Dendritic cell treated with granulocyte-macrophage colony-stimulating factor and Interleukin-4, amounts not matched to agents 40 ng/mL and 50 ng/mL, for 4 days (primary cell): ENCODE measurements at regions of chr11 and their contacts with region 1.

Region 1: DNA sequence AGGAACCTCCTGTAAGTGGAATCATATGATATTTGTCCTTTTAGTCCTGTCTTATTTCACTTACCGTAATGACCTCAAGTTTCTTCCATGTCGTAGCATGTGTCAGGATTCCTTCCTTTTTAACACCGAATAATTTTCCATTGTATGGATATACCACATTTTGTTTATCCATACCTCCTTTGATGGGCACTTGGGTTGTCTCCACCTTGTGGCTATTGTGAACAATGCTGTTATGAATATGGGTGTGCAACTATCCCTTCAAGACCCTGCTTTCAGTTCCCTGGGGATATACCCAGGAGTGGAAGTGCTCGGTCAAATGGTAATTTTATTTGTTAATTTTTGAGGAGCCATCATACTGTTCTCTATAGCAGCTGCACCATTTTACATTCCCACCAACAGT is 244.9 kb upstream of the BLID start:
- H3K4me3 Mint-ChIP-seq: no peak overlapping the region
- H3K27ac Mint-ChIP-seq: no peak overlapping the region
- H3K4me1 Mint-ChIP-seq: no peaks in the 10 kb centered on the region
- H3K27me3 Mint-ChIP-seq: no peaks in the 10 kb centered on the region

Region 2: DNA sequence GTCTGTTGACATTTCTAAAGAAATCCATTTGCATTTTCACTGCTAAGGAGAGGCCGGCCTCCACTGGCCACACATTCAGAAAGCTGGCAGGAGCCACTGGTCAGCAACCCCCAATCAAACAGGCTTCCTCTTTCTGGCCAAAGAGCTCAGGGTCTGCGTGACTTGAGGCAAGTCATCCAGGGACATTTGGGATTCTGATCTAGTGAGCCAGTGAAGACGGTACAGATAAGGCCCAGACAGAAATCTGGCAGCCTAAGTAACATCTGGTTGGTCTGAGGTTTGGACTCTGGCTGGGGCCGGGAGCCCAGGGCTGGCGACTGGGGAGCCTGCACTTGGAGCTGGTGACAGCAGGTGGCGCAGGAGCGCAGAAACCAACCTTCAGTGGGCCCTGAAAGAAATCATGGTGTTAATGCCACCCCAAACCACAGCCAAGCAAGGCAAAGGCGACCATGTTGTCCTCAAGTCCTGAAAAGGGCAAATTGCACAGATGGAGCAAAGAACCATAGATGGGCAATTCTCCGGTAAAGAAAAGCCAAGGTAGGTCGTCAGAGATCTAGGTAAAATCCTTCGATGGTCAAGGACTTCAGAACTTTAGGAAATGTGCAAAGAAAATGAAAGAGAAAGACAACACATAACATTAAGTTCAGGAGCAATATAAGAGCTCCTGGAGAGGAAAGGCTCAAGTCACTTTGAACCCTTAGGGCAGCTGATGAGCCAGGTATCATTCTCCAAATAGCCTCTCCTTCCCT is 145.5 kb before region 1 on chr11:
- intact Hi-C with region 1: loop called (anchors 5 kb)
- H3K4me3 Mint-ChIP-seq: no peak overlapping the region
- H3K27ac Mint-ChIP-seq: no peak overlapping the region
- H3K4me1 Mint-ChIP-seq: peaks cover 7% of the 10 kb centered on the region
- H3K27me3 Mint-ChIP-seq: no peaks in the 10 kb centered on the region

Region 3: DNA sequence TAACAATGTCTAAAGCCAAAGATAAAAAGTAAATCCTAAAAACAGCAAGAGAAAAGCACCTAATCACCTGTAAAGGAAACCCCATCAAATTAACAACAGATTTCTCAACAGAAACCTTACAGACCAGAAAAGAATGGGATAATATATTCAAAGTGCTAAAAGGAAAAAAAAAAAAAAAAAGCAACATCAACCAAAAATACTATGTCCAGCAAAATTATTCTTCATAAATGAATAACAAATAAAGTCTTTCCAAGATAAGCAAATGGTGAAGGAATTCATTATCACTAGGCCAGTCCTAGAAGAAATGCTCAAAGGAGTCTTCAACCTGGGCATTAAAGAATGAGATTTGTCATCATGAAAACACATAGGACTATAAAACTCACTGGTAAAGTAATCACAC is 102.7 kb after region 1 on chr11:
- intact Hi-C with region 1: no loop called
- H3K4me3 Mint-ChIP-seq: no peak overlapping the region
- H3K27ac Mint-ChIP-seq: no peak overlapping the region
- H3K4me1 Mint-ChIP-seq: no peaks in the 10 kb centered on the region
- H3K27me3 Mint-ChIP-seq: no peaks in the 10 kb centered on the region